HEK293T (cell line): ENCODE measurements at regions of chr14 and their contacts with region 1.

Region 1: DNA sequence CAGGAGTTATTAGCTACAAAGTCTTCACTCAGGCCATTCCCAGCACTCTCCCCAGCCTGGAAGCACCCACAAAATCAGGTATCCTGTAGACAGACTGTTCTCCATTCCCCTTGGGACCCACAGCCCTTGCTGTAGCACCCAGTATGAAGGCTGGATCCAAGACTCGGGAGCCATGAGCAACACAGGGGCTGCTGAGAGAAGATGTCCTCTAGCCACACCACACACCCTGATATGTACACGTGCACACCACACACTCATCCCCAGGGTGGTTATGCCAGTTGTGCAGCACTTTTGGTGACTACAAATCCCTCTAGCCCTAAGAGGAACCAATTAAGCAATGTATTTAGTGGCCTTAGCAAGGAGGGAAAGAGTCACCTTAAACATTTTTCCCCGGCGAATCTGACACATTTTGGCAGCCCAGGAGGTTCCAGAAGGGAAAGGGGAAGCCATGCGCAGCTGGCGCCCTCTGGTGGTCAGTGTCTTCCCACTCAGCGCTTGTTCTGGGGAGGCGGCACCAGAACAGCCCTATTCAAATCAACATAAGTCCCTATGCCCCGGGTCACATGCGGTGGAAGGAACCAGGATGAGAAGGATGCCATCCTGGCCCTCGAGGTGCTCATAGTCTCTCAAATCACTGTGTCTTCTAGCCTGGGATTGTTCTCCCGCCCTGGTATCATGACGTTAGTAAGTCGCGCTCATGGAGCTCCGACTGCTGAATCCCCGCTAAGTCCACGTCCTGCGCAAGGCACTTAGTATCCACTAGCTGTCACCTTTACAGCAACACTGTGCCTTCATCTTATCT is 96.9 kb downstream of the GCH1 start:
- DNase-seq: peak; percentile 85

Region 2: GRCh38 chr14:54773171-54773975 is 32.3 kb before region 1 on chr14:
- CTCF ChIA-PET with region 1: interaction called, 13 read pairs
- POLR2A ChIA-PET with region 1: no interaction called
- DNase-seq: peak; percentile 83

Region 3: GRCh38 chr14:54818201-54819133 is 12.7 kb after region 1 on chr14:
- CTCF ChIA-PET with region 1: interaction called, 25 read pairs
- POLR2A ChIA-PET with region 1: interaction called, 4 read pairs
- DNase-seq: peak; percentile 57